Dendritic cell treated with granulocyte-macrophage colony-stimulating factor and Interleukin-4, amounts not matched to agents 40 ng/mL and 50 ng/mL, for 4 days (primary cell): ENCODE measurements at regions of chr11 and their contacts with region 1.

Region 1: DNA sequence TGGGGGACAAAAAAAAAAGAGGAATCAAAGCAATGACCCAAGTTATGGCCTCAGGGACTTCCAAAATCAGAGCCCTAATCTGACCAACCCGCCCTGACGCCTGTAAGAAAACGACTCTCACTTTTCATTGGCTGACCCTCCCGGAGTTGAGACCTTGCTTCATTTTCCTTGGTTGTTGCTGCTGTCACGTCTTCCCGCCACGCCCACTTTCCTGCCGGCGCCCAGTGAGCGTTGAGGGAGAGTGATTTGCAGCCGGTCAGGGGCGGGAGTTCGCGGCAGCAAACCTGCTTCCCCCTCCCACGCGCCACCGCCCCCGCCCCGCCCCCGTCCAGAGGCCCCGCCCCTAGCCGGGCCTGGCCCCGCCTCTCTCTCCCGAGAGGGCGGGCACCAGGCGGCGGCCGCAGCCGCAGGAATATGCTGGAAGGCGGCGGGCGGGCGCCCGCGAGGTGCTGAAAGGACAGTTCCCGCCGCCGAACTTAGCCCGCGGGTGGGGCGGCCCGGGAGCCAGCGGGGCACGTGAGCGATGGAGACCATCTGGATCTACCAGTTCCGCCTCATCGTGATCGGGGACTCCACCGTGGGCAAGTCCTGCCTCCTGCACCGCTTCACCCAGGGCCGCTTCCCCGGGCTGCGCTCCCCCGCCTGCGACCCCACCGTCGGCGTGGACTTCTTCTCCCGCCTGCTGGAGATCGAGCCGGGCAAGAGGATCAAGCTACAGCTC is at the start of gene RAB39A:
- H3K4me3 Mint-ChIP-seq: peak within 1 kb of the TSS; percentile 96
- H3K27ac Mint-ChIP-seq: peak within 1 kb of the TSS; percentile 99
- H3K4me1 Mint-ChIP-seq: peaks cover 38% of the 10 kb centered on the region
- H3K27me3 Mint-ChIP-seq: peaks cover 4% of the 10 kb centered on the region

Region 2: DNA sequence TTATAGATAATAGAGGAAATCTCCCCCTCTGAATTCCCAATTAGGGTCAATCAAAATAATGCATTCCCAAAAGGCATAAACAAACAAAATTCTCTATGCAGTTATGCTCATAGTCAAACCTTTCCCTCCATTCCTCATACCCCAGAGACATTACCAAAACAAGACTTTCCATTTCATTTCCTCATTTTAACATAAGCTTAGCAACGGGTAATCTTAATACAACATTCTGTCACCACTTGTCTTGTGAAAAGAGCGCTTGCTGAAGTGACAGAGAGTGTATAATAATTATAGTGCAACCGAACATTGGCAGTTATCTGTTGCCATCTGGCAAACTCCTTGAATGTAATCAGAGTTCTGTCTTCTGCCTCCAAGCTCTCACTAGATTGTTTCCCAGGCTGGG is 215.2 kb before region 1 on chr11:
- intact Hi-C with region 1: no loop called
- H3K4me3 Mint-ChIP-seq: no peak overlapping the region
- H3K27ac Mint-ChIP-seq: no peak overlapping the region
- H3K4me1 Mint-ChIP-seq: no peaks in the 10 kb centered on the region
- H3K27me3 Mint-ChIP-seq: peaks cover 9% of the 10 kb centered on the region

Region 3: GRCh38 chr11:107957109-107957588 is 28.9 kb after region 1 on chr11:
- intact Hi-C with region 1: loop called (anchors 1 kb)
- H3K4me3 Mint-ChIP-seq: peak overlapping the region; percentile 15
- H3K27ac Mint-ChIP-seq: peak overlapping the region; percentile 66
- H3K4me1 Mint-ChIP-seq: peaks cover 39% of the 10 kb centered on the region
- H3K27me3 Mint-ChIP-seq: no peaks in the 10 kb centered on the region

Region 4: GRCh38 chr11:107988397-107989158 is 60.4 kb after region 1 on chr11:
- intact Hi-C with region 1: loop called (anchors 1 kb)
- H3K4me3 Mint-ChIP-seq: no peak overlapping the region
- H3K27ac Mint-ChIP-seq: no peak overlapping the region
- H3K4me1 Mint-ChIP-seq: peaks cover 12% of the 10 kb centered on the region
- H3K27me3 Mint-ChIP-seq: no peaks in the 10 kb centered on the region

Region 5: GRCh38 chr11:108008656-108009496 is 80.7 kb after region 1 on chr11 and contains the start of gene CUL5:
- intact Hi-C with region 1: loop called (anchors 1 kb)
- H3K4me3 Mint-ChIP-seq: peak within 1 kb of the TSS; percentile 89
- H3K27ac Mint-ChIP-seq: peak within 1 kb of the TSS; percentile 99
- H3K4me1 Mint-ChIP-seq: no peaks in the 10 kb centered on the region
- H3K27me3 Mint-ChIP-seq: peaks cover under 1% of the 10 kb centered on the region

Region 6: DNA sequence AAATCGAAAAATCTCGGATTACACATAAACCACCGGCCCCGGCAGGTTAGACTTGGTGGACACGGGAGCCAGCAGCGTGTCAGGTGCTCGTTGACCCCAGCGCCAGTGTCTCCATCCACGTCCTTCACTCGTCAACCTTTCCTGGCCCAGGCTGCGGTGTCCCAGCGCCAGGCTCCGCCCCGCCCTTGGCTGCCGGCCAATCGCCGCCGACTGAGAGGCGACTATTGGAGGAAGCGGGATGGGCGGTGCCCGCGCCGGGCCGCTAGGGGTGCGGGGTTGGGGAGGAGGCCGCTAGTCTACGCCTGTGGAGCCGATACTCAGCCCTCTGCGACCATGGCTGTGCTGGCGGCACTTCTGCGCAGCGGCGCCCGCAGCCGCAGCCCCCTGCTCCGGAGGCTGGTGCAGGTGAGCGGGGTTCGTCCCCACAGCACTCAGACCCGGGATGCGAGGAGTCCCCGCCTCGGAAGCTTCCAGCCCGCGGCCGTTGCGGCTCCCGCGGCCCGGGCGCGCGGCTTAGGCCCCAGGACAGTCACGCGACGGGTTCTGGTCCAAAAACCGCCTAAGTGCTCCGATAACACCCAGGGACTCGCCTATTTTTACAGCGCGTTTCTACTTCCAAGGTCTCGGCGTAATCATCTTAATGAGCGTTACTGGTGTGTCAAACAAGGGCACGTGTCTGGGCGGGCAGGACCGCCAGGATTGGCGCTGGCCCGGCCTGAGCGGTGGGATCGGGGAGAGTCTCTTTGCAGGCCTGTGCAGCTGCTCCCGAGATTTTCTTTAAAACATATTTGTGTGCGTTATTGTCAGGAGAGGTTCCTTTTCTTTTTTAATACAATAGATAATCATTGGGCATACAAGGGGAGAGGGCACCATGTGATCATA is 193.3 kb after region 1 on chr11 and contains the start of gene ACAT1:
- intact Hi-C with region 1: loop called (anchors 5 kb)
- H3K4me3 Mint-ChIP-seq: peak within 1 kb of the TSS; percentile 79
- H3K27ac Mint-ChIP-seq: peak within 1 kb of the TSS; percentile 63
- H3K4me1 Mint-ChIP-seq: peaks cover 46% of the 10 kb centered on the region
- H3K27me3 Mint-ChIP-seq: no peaks in the 10 kb centered on the region

Region 7: GRCh38 chr11:108222686-108223448 is 294.7 kb after region 1 on chr11 and contains the start of gene ATM:
- intact Hi-C with region 1: loop called (anchors 2 kb)
- H3K4me3 Mint-ChIP-seq: no peak within 1 kb of the TSS
- H3K27ac Mint-ChIP-seq: no peak within 1 kb of the TSS
- H3K4me1 Mint-ChIP-seq: peaks cover 54% of the 10 kb centered on the region
- H3K27me3 Mint-ChIP-seq: no peaks in the 10 kb centered on the region

Region 8: GRCh38 chr11:108664730-108665525 is 736.7 kb after region 1 on chr11 and contains the start of gene DDX10:
- intact Hi-C with region 1: loop called (anchors 10 kb)
- H3K4me3 Mint-ChIP-seq: peak within 1 kb of the TSS; percentile 100
- H3K27ac Mint-ChIP-seq: peak within 1 kb of the TSS; percentile 86
- H3K4me1 Mint-ChIP-seq: peaks cover 45% of the 10 kb centered on the region
- H3K27me3 Mint-ChIP-seq: no peaks in the 10 kb centered on the region